ENCODE measurements at regions of chr12 and their contacts with region 1.

Region 1: GRCh38 chr12:49325606-49326005 is 2.6 kb downstream of the TROAP start:
- DNase-seq: no peak
- H3K4me3 ChIP-seq: no peak overlapping the region
- CTCF ChIP-seq: no peak

Region 2: GRCh38 chr12:49264738-49265515 is 60.7 kb before region 1 on chr12 and contains the start of gene TUBA1C:
- in situ Hi-C with region 1: loop called (anchors 5 kb)
- DNase-seq: peak; percentile 65
- H3K4me3 ChIP-seq: peak within 1 kb of the TSS; percentile 94
- CTCF ChIP-seq: no peak

Region 3: DNA sequence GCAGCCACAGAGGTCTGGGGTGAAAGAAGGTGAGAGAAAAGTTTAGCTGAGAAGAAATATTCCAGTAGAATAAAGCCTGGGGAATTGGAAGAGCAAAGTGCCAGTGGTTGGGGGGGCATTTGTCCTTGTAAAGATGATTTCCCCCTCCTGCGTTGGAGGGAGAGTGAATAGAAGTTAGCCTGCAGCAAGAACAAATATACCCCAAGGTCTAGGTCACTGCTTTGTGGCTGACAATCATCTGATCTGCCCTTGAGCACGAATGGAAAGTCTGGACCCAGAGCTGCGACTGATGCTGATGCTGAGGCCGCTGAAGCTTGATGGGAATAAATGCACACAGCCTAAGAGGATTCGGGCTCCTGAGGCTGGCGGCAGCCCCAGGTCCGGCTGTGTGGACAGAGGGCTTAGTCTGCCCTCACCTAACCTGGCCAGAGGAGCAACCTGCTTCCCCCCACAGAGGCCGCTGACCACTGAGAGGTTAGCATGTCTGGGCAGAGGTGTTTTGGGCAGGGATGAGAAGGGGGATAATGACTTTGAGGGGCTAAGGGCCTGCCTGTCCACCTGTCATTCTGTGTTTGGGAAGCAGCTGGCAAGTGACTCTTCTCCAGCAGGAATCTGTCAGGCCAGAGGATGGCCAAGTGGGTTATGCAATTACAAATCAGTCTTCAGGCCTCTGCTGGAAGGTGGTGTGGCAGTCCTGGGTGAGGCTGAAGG is 49.1 kb before region 1 on chr12:
- in situ Hi-C with region 1: no loop called
- DNase-seq: no peak
- H3K4me3 ChIP-seq: no peak overlapping the region
- CTCF ChIP-seq: no peak

Region 4: DNA sequence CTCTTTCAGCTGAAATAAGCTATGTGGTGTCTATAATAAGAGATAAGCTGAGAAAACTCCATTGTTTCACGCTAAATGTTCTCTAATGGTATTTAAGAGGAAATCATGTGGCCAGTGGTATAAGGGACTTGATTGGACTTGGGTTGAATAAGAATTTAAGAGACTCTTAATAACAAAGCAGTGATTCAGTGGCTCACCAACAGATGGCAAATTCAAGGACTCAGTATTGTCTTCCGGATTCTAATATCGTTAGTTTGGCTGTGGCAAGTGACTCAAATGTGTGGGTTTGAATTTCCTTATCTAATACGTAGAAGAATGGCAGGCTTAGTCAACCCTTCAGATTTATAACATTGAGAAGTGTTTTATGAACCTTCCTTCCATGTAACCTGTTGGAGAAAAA is 164.1 kb after region 1 on chr12:
- in situ Hi-C with region 1: no loop called
- DNase-seq: peak; percentile 28
- H3K4me3 ChIP-seq: no peak overlapping the region
- CTCF ChIP-seq: peak; percentile 7

Region 5: DNA sequence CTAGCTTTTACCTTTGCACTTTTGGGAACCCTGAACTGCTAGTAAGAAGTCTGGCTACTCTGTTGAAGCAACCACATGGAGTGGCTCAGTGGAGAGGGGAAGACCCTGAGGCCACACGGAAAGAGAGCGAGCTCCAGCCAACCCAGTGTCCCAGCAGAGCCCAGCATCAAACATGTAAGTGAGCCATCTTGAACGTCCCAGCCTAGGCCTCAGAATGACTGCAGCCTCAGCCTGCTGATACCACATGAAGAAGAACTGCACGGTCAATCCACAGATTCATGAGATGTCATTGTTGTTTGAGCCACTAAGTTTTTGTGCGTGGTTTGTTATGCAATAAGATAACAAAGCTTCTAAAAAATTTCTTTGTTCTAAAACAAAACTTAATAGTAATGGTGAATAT is 1807.1 kb after region 1 on chr12:
- in situ Hi-C with region 1: no loop called
- DNase-seq: no peak
- H3K4me3 ChIP-seq: no peak overlapping the region
- CTCF ChIP-seq: no peak

Measured in astrocyte of the cerebellum (primary cell).